ENCODE measurements at regions of chr12 and their contacts with region 1.

Region 1: GRCh38 chr12:94133964-94134795 is 14.2 kb upstream of the PLXNC1 start:
- DNase-seq: peak; percentile 56
- H3K4me3 ChIP-seq: no peak overlapping the region
- H3K27ac ChIP-seq: no peak overlapping the region
- H3K4me1 ChIP-seq: no peaks in the 10 kb centered on the region
- H3K27me3 ChIP-seq: peaks cover 8 to 9% of the 10 kb centered on the region in 2 experiments
- CTCF ChIP-seq: peak; percentile 40 to 58
- POLR2A ChIP-seq: no peak

Region 2: DNA sequence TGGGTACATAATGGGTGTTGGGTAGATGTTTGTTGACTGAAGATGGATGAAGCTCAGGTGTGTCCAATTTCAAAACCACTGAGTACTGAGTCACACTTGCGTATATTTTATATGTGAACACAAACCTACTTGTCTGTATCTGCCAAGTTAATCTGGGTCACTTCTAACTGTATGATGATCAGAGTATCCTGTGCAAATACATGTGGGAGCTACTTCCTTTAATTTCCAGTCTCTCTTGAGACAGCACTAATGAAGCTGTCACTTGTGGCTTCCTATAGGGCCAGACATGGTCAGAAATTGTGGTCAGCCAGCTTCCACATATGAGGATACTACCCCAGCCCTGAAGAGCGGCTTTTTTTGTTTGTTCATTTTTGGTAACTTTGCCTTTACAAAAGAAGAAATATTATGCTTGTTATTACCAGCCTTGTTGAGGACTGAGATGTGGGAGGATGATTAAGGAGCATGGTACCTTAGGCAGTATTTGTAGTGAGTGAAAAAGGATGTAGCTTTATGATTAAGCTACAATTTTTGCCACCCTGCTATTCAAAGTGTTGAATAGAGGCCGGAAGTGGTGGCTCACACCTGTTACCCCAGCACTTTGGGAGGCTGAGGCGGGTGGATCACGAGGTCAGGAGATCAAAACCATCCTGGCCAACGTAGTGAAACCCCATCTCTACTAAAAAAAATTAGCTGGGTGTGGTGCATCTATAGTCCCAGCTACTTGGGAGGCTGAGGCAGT is 46.5 kb after region 1 on chr12:
- CTCF ChIA-PET with region 1: no interaction called
- POLR2A ChIA-PET with region 1: no interaction called
- dilution Hi-C with region 1: no loop called
- intact Hi-C with region 1: no loop called
- DNase-seq: no peak
- H3K4me3 ChIP-seq: no peak overlapping the region
- H3K27ac ChIP-seq: no peak overlapping the region
- H3K4me1 ChIP-seq: no peaks in the 10 kb centered on the region
- H3K27me3 ChIP-seq: peaks cover 2 to 5% of the 10 kb centered on the region in 2 experiments
- CTCF ChIP-seq: no peak
- POLR2A ChIP-seq: no peak

Region 3: DNA sequence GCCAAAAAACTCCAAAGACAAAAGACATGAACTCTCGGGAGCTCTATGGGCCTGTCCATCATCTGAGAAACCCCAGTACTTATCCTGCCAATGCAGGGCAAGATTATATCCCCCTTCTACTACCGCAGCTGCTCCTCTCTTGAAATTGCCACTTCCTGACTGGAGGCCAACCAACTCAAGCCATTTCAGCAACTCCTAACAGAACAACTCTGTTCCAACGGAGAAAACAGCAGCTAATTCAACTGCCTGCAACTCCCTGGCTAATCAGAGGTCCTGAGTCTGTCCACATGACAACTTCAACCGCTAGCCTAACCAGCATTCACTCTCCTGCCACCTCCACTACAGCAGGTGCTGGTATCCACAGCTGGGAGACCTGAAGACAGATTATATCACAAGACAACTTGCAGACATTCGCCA is 301.3 kb after region 1 on chr12:
- CTCF ChIA-PET with region 1: interaction called, 22 read pairs
- POLR2A ChIA-PET with region 1: no interaction called
- dilution Hi-C with region 1: no loop called
- intact Hi-C with region 1: loop called (anchors 1 kb)
- DNase-seq: no peak
- H3K4me3 ChIP-seq: no peak overlapping the region
- H3K27ac ChIP-seq: no peak overlapping the region
- H3K4me1 ChIP-seq: no peaks in the 10 kb centered on the region
- H3K27me3 ChIP-seq: no peaks in the 10 kb centered on the region
- CTCF ChIP-seq: no peak
- POLR2A ChIP-seq: no peak

Region 4: DNA sequence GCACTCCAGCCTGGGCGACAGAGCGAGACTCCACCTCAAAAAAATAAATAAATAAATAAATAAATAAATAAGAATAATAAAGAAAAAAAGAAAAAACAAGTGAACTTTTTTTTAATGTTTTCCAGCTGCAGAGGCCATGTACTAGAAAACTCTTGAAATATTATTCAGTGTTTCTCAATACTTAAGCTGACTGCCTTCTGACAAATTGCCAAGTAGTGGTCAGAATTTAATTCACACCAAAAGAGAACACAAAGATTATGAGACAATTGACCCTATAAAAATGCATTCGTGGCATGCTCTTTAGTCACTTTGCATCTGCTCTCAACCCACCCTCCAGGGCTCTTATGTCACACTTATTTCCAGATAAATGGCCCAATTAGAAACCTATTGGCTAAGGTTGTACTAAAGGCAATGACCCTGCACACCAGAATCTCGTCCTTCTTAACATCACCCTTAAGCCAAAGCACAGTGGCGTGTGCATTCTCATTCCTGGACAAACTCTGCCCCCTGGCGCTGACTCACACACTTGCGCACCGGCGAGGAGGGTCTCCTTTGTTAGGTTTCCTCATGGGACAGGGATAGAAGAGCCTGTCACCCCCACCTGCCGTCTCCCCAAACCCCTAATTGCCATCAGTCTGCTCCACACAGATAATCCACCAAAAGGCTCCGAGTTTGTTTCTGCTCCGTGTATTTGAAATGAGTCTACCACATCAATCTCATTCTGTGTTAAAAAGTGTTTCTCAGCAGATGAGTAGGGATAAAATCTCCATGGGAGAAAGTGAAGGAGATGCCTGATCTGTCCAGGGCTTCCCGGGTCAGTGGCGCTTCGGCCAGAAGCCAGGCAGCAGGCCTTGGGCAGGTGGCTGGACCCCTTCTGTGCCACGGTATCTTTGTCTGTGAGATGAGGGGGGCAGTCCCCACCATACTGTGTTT is 398.6 kb after region 1 on chr12:
- CTCF ChIA-PET with region 1: interaction called, 43 read pairs
- POLR2A ChIA-PET with region 1: no interaction called
- dilution Hi-C with region 1: no loop called
- intact Hi-C with region 1: loop called (anchors 1 kb)
- DNase-seq: peak; percentile 64
- H3K4me3 ChIP-seq: no peak overlapping the region
- H3K27ac ChIP-seq: no peak overlapping the region
- H3K4me1 ChIP-seq: no peaks in the 10 kb centered on the region
- H3K27me3 ChIP-seq: no peaks in the 10 kb centered on the region
- CTCF ChIP-seq: peak; percentile 76 to 79
- POLR2A ChIP-seq: no peak